ENCODE measurements at regions of chr4 and their contacts with region 1.

Region 1: DNA sequence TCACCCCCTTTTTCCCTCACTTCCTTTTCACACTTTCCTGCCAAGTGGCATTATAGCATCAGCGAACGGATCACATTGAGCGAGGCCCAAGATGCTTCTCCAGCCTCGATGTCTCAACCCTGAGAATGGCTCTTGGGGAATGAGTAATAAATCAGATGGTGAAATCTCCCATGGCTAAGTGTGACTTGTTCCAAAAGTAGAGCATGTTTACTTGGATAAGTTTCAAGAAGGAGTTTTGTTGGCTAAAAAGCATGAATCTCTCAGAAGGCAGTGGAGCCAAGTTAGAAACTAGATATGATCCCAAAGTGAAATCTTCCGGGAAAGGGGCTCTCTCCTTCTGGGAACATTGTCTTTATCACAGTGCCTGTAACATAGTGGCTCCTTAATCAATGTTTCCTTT is 316.3 kb downstream of the CAMK2D start:
- DNase-seq: peak in 1 of 2 donors; percentile 92
- H3K4me3 ChIP-seq: no peak overlapping the region
- H3K27ac ChIP-seq: peak overlapping the region; percentile 58
- H3K4me1 ChIP-seq: peaks cover 44% of the 10 kb centered on the region
- H3K27me3 ChIP-seq: no peaks in the 10 kb centered on the region
- CTCF ChIP-seq: no peak
- POLR2A ChIP-seq: no peak

Region 2: DNA sequence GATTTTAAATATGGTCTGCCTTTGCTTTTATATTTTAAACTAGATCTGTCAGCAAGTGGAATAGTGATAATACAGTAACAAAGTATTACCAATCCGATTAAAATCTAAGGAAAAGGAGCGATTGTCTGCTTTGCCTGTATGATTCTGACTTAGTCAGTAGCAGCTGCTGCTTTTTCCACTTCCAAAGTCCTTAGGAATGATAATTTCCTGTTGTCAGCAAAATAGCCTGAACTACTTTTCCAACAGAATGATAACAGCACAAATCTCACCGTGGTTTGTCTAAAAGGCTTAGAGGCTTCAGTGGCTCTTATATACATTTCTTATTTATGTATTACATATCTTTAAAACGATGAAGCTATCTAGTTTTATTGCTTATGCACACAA is 105.9 kb before region 1 on chr4:
- intact Hi-C with region 1: no loop called
- DNase-seq: no peak
- H3K4me3 ChIP-seq: no peak overlapping the region
- H3K27ac ChIP-seq: no peak overlapping the region
- H3K4me1 ChIP-seq: no peaks in the 10 kb centered on the region
- H3K27me3 ChIP-seq: no peaks in the 10 kb centered on the region
- CTCF ChIP-seq: no peak
- POLR2A ChIP-seq: no peak

Region 3: GRCh38 chr4:113468165-113469022 is 23.1 kb after region 1 on chr4:
- intact Hi-C with region 1: loop called (anchors 2 kb)
- DNase-seq: peak; percentile 97 to 98
- H3K4me3 ChIP-seq: peak overlapping the region in 1 of 2 donors; percentile 12
- H3K27ac ChIP-seq: peak overlapping the region; percentile 91
- H3K4me1 ChIP-seq: peaks cover 22% of the 10 kb centered on the region
- H3K27me3 ChIP-seq: no peaks in the 10 kb centered on the region
- CTCF ChIP-seq: no peak
- POLR2A ChIP-seq: no peak